ENCODE measurements at regions of chr3 and their contacts with region 1.

Region 1: GRCh38 chr3:62665598-62666437 is 209.4 kb downstream of the CADPS start:
- DNase-seq: peak; percentile 26
- ATAC-seq: peak; percentile 90
- H3K4me3 ChIP-seq: no peak overlapping the region
- H3K27ac ChIP-seq: no peak overlapping the region
- H3K4me1 ChIP-seq: no peaks in the 10 kb centered on the region
- H3K27me3 ChIP-seq: peaks cover 8% of the 10 kb centered on the region; the same call in 1 of the 2 replicates
- CTCF ChIP-seq: peak; percentile 62 to 85 (median 68); a peak in 5 of 6 replicates
- POLR2A ChIP-seq: no peak
- RAD21 ChIP-seq: peak; percentile 77

Region 2: GRCh38 chr3:62479326-62479725 is 186.5 kb before region 1 on chr3:
- CTCF ChIA-PET with region 1: no interaction called
- POLR2A ChIA-PET with region 1: no interaction called
- RAD21 ChIA-PET with region 1: no interaction called
- intact Hi-C with region 1: no loop called
- DNase-seq: no peak
- ATAC-seq: no peak
- H3K4me3 ChIP-seq: no peak overlapping the region
- H3K27ac ChIP-seq: no peak overlapping the region
- H3K4me1 ChIP-seq: no peaks in the 10 kb centered on the region
- H3K27me3 ChIP-seq: peaks cover 60% of the 10 kb centered on the region
- CTCF ChIP-seq: no peak
- POLR2A ChIP-seq: no peak
- RAD21 ChIP-seq: no peak

Region 3: GRCh38 chr3:62873761-62874647 is 208.2 kb after region 1 on chr3:
- CTCF ChIA-PET with region 1: no interaction called
- POLR2A ChIA-PET with region 1: no interaction called
- RAD21 ChIA-PET with region 1: no interaction called
- intact Hi-C with region 1: no loop called
- DNase-seq: no peak
- ATAC-seq: peak; percentile 55; the same call in 1 of the 2 replicates
- H3K4me3 ChIP-seq: no peak overlapping the region
- H3K27ac ChIP-seq: no peak overlapping the region
- H3K4me1 ChIP-seq: no peaks in the 10 kb centered on the region
- H3K27me3 ChIP-seq: no peaks in the 10 kb centered on the region
- CTCF ChIP-seq: peak; percentile 6 to 43 (median 27); a peak in 3 of 6 replicates
- POLR2A ChIP-seq: no peak
- RAD21 ChIP-seq: peak; percentile 39; the same call in 1 of the 2 replicates

Region 4: DNA sequence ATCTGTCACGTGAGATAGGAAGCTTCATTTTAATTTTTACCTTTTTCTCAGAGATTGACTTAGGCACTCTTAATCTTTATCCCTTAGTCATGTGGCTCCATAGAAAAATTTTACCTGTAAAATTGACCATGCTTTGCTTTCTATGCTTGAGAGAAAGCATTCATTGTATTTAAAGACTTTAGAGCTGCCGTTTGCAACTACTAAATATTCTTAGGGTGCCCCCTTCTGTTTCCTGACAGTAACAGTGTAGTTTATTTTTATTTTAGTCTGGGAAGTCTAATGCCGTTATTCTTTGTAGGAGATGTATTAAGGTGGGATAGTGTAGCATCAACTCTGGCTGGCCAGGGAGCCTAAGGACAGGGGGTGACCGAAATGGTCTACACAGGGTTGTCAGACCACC is 527.8 kb after region 1 on chr3:
- CTCF ChIA-PET with region 1: interaction called, 6 read pairs
- POLR2A ChIA-PET with region 1: no interaction called
- RAD21 ChIA-PET with region 1: no interaction called
- intact Hi-C with region 1: loop called (anchors 1 kb)
- DNase-seq: peak; percentile 3
- ATAC-seq: peak; percentile 44; the same call in 1 of the 2 replicates
- H3K4me3 ChIP-seq: no peak overlapping the region
- H3K27ac ChIP-seq: no peak overlapping the region
- H3K4me1 ChIP-seq: no peaks in the 10 kb centered on the region
- H3K27me3 ChIP-seq: no peaks in the 10 kb centered on the region
- CTCF ChIP-seq: peak; percentile 5 to 47 (median 45); a peak in 3 of 6 replicates
- POLR2A ChIP-seq: no peak
- RAD21 ChIP-seq: peak; percentile 65

Region 5: GRCh38 chr3:63228087-63229023 is 562.5 kb after region 1 on chr3:
- CTCF ChIA-PET with region 1: interaction called, 9 read pairs
- POLR2A ChIA-PET with region 1: no interaction called
- RAD21 ChIA-PET with region 1: no interaction called
- intact Hi-C with region 1: loop called (anchors 2 kb)
- DNase-seq: peak; percentile 16
- ATAC-seq: peak; percentile 53
- H3K4me3 ChIP-seq: no peak overlapping the region
- H3K27ac ChIP-seq: no peak overlapping the region
- H3K4me1 ChIP-seq: no peaks in the 10 kb centered on the region
- H3K27me3 ChIP-seq: no peaks in the 10 kb centered on the region
- CTCF ChIP-seq: peak; percentile 22 to 46 (median 38); a peak in 4 of 6 replicates
- POLR2A ChIP-seq: no peak
- RAD21 ChIP-seq: peak; percentile 54

Region 6: DNA sequence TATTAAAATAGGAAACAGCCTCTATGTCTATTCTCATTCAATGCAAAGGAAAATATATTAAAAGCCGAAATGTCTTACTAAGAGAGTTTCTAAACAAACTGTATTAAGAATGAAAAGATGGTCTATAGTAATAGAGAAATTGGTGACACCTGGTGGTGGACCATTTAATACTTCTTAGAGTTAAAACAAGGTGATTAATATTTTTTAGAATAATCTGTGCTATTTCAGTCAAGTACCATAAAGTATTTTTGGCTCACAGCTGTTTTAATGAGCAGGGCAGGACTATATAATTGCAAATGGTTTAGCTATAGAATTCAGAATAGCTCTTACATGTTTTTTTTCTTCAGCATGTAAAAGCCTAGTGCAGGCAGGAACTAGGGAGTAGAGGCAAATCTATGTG is 668.0 kb after region 1 on chr3:
- CTCF ChIA-PET with region 1: no interaction called
- POLR2A ChIA-PET with region 1: no interaction called
- RAD21 ChIA-PET with region 1: no interaction called
- intact Hi-C with region 1: loop called (anchors 10 kb)
- DNase-seq: no peak
- ATAC-seq: no peak
- H3K4me3 ChIP-seq: no peak overlapping the region
- H3K27ac ChIP-seq: no peak overlapping the region
- H3K4me1 ChIP-seq: no peaks in the 10 kb centered on the region
- H3K27me3 ChIP-seq: peaks cover 5% of the 10 kb centered on the region; the same call in 1 of the 2 replicates
- CTCF ChIP-seq: peak; percentile 6 to 31 (median 10); a peak in 2 of 6 replicates
- POLR2A ChIP-seq: no peak
- RAD21 ChIP-seq: no peak

Region 7: DNA sequence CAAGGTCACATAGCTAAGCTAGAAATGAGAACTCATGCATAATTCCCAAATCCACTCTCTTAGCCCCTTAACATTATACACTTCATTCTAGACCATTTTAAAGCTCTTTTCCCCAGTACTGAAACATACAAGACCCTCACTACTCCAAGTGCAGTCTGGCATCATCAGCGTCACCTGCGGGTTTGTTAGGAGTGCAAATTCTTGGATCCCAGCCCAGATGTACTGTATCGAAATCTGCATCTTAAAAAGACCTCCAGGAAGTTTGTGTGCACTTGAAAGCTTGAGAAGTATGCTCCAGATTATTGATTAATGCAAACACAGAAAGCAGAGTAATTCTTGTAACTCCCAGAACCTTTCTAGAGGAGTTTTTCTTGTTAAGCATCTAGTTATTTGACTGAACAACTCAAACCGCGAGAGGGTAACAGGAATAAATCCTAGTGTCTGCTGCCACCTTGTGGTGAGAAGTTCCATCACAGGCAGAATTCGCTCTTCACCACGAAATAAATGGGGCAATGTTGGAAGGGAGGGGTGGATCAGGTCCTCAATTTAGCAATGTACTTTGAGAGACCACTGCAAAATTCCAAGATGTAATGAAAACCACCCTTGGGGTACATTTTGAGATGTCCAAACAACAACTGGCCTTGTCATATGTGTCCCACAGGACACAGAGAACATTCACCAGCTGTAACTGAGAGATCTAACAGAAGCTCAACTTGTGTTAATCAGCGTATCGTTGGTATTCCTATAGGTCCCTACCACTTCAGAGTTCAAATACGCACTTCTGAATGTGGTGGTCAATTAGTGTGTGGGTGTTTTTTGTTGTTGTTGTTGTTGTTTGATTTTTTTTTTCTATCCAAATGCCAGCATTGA is 1152.7 kb after region 1 on chr3:
- CTCF ChIA-PET with region 1: no interaction called
- POLR2A ChIA-PET with region 1: no interaction called
- RAD21 ChIA-PET with region 1: no interaction called
- intact Hi-C with region 1: loop called (anchors 2 kb)
- DNase-seq: peak; percentile 28
- ATAC-seq: peak; percentile 75
- H3K4me3 ChIP-seq: no peak overlapping the region
- H3K27ac ChIP-seq: no peak overlapping the region
- H3K4me1 ChIP-seq: no peaks in the 10 kb centered on the region
- H3K27me3 ChIP-seq: no peaks in the 10 kb centered on the region
- CTCF ChIP-seq: peak; percentile 54 to 93 (median 64); a peak in 5 of 6 replicates
- POLR2A ChIP-seq: no peak
- RAD21 ChIP-seq: peak; percentile 77

Measured in HCT116 (cell line).